SK-N-SH (cell line): ENCODE measurements at regions of chr19 and their contacts with region 1.

Region 1: GRCh38 chr19:55146078-55146704 is 2.8 kb downstream of the TNNT1 start:
- DNase-seq: peak; percentile 76
- H3K4me3 ChIP-seq: peak overlapping the region in 1 of 2 experiments; percentile 24; a peak in 2 of 4 replicates
- H3K27ac ChIP-seq: no peak overlapping the region
- H3K4me1 ChIP-seq: no peaks in the 10 kb centered on the region; a peak in 1 of 4 replicates
- H3K27me3 ChIP-seq: peaks cover 28% of the 10 kb centered on the region
- CTCF ChIP-seq: peak; percentile 54
- EP300 ChIP-seq: no peak
- RAD21 ChIP-seq: no peak

Region 2: DNA sequence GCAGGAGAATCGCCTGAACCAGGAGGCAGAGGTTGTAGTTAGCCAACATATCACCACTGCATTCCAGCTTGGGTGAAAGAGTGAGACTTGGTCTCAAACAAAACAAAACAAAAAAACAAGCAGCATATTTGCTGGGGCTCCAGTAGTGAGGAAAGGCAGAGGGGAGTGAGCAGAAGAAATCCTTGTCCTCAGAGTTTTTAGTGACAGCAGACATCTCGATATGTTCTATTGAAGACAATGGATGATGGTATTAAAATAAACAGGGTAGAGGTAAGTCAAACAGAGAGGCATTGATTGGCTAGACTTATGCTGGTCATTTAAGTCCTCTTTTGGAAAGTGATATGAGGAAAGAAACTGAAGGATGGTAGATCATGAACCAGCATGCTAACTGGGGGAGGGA is 217.9 kb before region 1 on chr19:
- CTCF ChIA-PET with region 1: no interaction called
- POLR2A ChIA-PET with region 1: no interaction called
- DNase-seq: no peak
- H3K4me3 ChIP-seq: no peak overlapping the region
- H3K27ac ChIP-seq: no peak overlapping the region
- H3K4me1 ChIP-seq: no peaks in the 10 kb centered on the region
- H3K27me3 ChIP-seq: peaks cover 36% of the 10 kb centered on the region; the same call in 1 of the 2 replicates
- CTCF ChIP-seq: no peak
- EP300 ChIP-seq: no peak
- RAD21 ChIP-seq: no peak

Region 3: DNA sequence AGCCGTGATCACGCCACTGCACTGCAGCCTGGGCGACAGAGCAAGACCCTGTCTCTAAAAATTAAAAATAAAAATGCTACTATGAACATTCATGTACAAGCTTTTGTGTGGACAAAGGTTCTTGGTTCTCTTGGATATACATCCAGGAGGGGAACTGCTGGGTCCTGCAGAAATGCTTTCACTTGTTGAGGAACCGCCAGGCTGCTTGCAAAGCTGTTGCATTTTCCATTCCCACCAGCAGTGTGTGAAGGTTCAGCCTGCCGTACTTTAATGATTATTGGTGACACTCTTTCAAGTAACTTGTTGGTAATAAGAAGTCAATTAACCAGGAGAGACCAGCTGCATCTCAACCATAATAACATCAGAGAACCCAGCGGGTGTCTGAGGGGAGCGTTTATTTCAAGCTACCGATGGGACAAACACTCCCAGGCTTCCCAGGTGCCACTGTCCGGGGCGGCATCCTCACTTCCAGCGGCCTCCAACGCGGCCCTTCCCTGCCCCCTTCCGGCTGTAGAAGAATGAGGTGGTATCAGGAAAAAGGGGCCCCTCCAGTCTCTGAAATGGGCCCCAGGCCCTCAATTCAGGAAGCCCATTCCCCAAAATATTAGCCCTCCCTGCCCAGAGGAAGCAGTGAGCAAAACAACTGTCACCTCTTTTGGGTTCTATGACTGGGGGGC is 13.6 kb before region 1 on chr19:
- CTCF ChIA-PET with region 1: interaction called, 23 read pairs
- POLR2A ChIA-PET with region 1: no interaction called
- DNase-seq: peak; percentile 56
- H3K4me3 ChIP-seq: no peak overlapping the region
- H3K27ac ChIP-seq: no peak overlapping the region
- H3K4me1 ChIP-seq: no peaks in the 10 kb centered on the region
- H3K27me3 ChIP-seq: peaks cover 13% of the 10 kb centered on the region; the same call in 1 of the 2 replicates
- CTCF ChIP-seq: peak; percentile 41
- EP300 ChIP-seq: no peak
- RAD21 ChIP-seq: peak; percentile 55

Region 4: GRCh38 chr19:55166530-55167268 is 20.5 kb after region 1 on chr19 and contains the start of gene DNAAF3:
- CTCF ChIA-PET with region 1: interaction called, 116 read pairs
- POLR2A ChIA-PET with region 1: no interaction called
- DNase-seq: peak; percentile 99
- H3K4me3 ChIP-seq: peak within 1 kb of the TSS; percentile 55 to 86
- H3K27ac ChIP-seq: peak within 1 kb of the TSS in 1 of 2 experiments; percentile 60; a peak in 1 of 4 replicates
- H3K4me1 ChIP-seq: peaks cover 0 to 6% of the 10 kb centered on the region in 2 experiments; a peak in 1 of 4 replicates
- H3K27me3 ChIP-seq: peaks cover 47% of the 10 kb centered on the region
- CTCF ChIP-seq: no peak
- EP300 ChIP-seq: no peak; a peak in 1 of 4 replicates
- RAD21 ChIP-seq: no peak
- polyA plus RNA-seq, gene DNAAF3: 2.4 and 2.5 TPM in 2 replicates

Region 5: DNA sequence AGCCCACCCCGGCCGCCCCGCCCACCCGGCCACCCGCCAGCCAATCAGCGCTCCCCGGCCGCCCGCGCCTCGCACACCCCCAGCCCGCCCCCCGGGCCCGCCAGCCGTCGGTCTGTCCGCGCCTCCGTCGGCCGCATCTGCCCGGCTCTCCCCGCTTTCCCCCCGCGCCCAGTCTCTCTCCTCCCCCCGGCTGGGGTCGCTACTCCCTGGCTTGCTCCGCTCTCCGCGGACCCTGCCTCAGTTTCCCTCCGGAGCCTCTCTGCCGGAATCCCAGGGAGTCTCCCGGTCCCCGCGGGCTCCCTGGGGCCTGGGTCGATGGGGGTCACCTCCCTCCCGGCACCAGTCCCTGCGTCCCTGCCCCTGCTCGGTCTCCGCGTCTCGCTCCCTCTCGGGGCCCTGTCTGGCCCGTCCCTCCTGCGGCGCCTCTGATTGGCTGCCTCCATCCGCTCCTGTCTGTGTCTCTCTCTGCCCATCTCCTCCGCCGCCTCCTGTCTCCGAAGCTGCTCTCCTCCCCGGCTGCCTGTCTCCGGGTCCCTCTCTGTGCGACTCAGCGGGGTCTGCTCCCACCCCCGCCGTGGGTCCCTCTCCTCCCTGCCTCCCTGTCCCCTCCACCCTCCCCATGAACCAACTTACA is 223.6 kb after region 1 on chr19:
- CTCF ChIA-PET with region 1: interaction called, 10 read pairs
- POLR2A ChIA-PET with region 1: no interaction called
- DNase-seq: peak; percentile 96
- H3K4me3 ChIP-seq: peak overlapping the region; percentile 57 to 79
- H3K27ac ChIP-seq: peak overlapping the region; percentile 11 to 88; a peak in 3 of 4 replicates
- H3K4me1 ChIP-seq: peaks cover 26 to 28% of the 10 kb centered on the region in 2 experiments; a peak in 3 of 4 replicates
- H3K27me3 ChIP-seq: no peaks in the 10 kb centered on the region
- CTCF ChIP-seq: no peak
- EP300 ChIP-seq: no peak
- RAD21 ChIP-seq: no peak

Region 6: DNA sequence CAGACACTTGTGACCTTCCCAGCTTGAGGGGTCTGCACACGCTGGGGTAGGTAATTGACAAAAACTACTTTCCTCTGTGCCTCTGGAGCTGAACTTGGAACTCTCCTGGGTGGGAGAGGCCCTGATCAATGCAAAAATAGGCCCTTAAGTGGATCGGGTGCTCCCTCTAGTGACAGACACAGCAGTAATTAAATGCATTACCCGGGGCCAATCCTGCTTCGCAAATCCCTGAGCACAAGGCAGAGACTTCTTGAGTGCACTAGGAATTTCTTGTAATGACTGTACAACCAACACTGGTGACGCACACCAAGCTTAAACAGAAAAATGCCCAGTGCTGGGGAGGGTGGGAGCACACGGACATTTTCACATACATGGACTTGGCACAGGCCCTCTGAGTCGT is 272.0 kb after region 1 on chr19:
- CTCF ChIA-PET with region 1: interaction called, 63 read pairs
- POLR2A ChIA-PET with region 1: no interaction called
- DNase-seq: peak; percentile 83
- H3K4me3 ChIP-seq: no peak overlapping the region; a peak in 1 of 4 replicates
- H3K27ac ChIP-seq: no peak overlapping the region
- H3K4me1 ChIP-seq: no peaks in the 10 kb centered on the region
- H3K27me3 ChIP-seq: no peaks in the 10 kb centered on the region
- CTCF ChIP-seq: peak; percentile 82
- EP300 ChIP-seq: no peak
- RAD21 ChIP-seq: peak; percentile 93

Region 7: DNA sequence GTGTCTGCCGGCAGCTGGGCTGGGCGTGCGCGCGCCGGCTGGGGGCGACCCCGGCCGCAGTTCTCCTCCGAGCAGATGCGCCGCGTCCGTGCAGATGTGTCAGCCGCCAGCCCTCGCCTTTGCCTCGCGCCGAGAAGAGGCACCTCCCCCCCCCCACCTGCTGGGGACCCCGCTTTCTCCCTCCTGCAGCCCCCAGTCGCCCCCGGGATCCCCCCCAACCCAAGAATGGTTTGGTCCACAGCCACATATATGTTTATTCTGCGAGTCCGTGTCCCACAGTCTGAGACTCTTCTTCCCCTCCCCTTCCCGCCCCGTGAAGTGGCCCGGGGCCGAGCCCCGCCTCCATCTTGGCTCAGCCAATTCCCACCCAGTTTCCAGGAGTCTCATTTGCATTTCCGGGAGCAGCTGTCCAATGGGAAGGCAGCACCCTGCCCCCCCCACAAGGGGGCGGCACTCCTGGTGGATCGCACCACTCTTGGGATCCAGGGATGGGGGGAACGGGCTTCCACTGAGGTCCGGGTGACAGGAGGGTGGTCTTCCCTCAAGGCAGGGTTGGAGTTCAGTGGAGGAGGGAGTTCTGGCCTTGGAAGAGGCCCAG is 306.7 kb after region 1 on chr19:
- CTCF ChIA-PET with region 1: interaction called, 14 read pairs
- POLR2A ChIA-PET with region 1: no interaction called
- DNase-seq: peak; percentile 98
- H3K4me3 ChIP-seq: peak overlapping the region in 1 of 2 experiments; percentile 36; a peak in 2 of 4 replicates
- H3K27ac ChIP-seq: no peak overlapping the region
- H3K4me1 ChIP-seq: peaks cover 0 to 13% of the 10 kb centered on the region in 2 experiments; a peak in 2 of 4 replicates
- H3K27me3 ChIP-seq: peaks cover 11% of the 10 kb centered on the region
- CTCF ChIP-seq: no peak; the same call in 1 of the 2 replicates
- EP300 ChIP-seq: no peak
- RAD21 ChIP-seq: no peak